ENCODE measurements at regions of chr19 and their contacts with region 1.

Region 1: GRCh38 chr19:16247353-16248182 is 49.9 kb downstream of the AP1M1 start:
- DNase-seq: peak; percentile 71 to 80 (median 73)
- H3K4me3 ChIP-seq: no peak overlapping the region
- H3K4me3 Mint-ChIP-seq: peak overlapping the region in 6 of 8 donors; percentile 23 to 66 (median 54)
- H3K27ac ChIP-seq: no peak overlapping the region
- H3K27ac Mint-ChIP-seq: peak overlapping the region; percentile 61 to 84 (median 67)
- H3K4me1 ChIP-seq: peaks cover 17% of the 10 kb centered on the region
- H3K4me1 Mint-ChIP-seq: peaks cover 11 to 26% (median 21%) of the 10 kb centered on the region in 4 donors
- H3K27me3 ChIP-seq: no peaks in the 10 kb centered on the region
- H3K27me3 Mint-ChIP-seq: peaks cover 0 to 3% of the 10 kb centered on the region in 2 donors

Region 2: GRCh38 chr19:16259385-16260159 is 12.0 kb after region 1 on chr19:
- CTCF ChIA-PET with region 1: interaction called, 20 read pairs
- POLR2A ChIA-PET with region 1: no interaction called
- intact Hi-C with region 1: no loop called
- DNase-seq: no peak
- H3K4me3 ChIP-seq: no peak overlapping the region
- H3K4me3 Mint-ChIP-seq: peak overlapping the region in 5 of 8 donors; percentile 2 to 62 (median 18)
- H3K27ac ChIP-seq: no peak overlapping the region
- H3K27ac Mint-ChIP-seq: peak overlapping the region in 2 of 7 donors; percentile 84 to 86
- H3K4me1 ChIP-seq: peaks cover 59% of the 10 kb centered on the region
- H3K4me1 Mint-ChIP-seq: peaks cover 23 to 70% (median 44%) of the 10 kb centered on the region in 4 donors
- H3K27me3 ChIP-seq: no peaks in the 10 kb centered on the region
- H3K27me3 Mint-ChIP-seq: no peaks in the 10 kb centered on the region

Region 3: DNA sequence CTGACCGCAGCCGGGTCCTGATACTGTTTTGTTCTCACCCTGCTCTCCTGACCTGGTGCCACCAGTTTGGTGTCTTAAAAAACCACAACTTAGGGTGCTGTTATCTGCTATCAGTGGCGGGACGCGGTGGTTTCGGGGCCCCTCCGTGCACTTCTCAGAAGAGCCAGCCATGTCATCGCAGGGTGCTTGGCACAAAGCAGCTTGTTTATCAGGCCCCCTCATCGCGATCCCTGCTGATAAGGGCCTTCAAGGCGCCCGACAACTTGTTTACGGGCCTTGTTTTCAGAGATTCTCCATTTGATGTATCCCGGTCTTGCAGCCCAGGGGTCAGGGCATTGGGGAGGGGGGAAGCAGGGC is 19.0 kb after region 1 on chr19:
- CTCF ChIA-PET with region 1: interaction called, 20 read pairs
- POLR2A ChIA-PET with region 1: interaction called, 5 read pairs
- intact Hi-C with region 1: no loop called
- DNase-seq: peak; percentile 59 to 81 (median 70)
- H3K4me3 ChIP-seq: peak overlapping the region in 1 of 2 donors; percentile 14
- H3K4me3 Mint-ChIP-seq: peak overlapping the region in 7 of 8 donors; percentile 21 to 79 (median 67)
- H3K27ac ChIP-seq: peak overlapping the region; percentile 33
- H3K27ac Mint-ChIP-seq: peak overlapping the region; percentile 84 to 93 (median 89)
- H3K4me1 ChIP-seq: peaks cover 58% of the 10 kb centered on the region
- H3K4me1 Mint-ChIP-seq: peaks cover 39 to 68% (median 53%) of the 10 kb centered on the region in 4 donors
- H3K27me3 ChIP-seq: no peaks in the 10 kb centered on the region
- H3K27me3 Mint-ChIP-seq: no peaks in the 10 kb centered on the region

Region 4: DNA sequence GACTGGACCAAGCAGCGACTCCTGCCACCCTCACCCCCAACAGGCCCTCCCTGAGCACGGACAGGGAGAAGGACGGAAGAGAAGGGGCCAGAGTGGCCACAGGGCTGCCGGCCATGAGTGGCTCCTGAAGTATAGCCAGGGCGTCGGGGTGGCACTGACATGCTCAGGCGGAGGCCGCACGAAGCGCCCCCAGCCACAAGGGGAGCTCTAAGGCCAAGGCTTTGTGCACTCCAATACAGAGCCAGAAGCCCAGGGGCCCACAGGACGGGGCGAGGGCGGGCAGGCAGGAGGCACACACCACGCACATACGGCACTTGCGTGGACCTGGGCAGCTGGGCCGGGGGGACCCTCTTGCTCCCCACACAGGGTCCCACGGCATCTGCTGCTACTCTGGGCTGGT is 129.1 kb after region 1 on chr19:
- CTCF ChIA-PET with region 1: interaction called, 257 read pairs
- POLR2A ChIA-PET with region 1: interaction called, 62 read pairs
- intact Hi-C with region 1: no loop called
- DNase-seq: peak in 1 of 5 donors; percentile 23
- H3K4me3 ChIP-seq: no peak overlapping the region
- H3K4me3 Mint-ChIP-seq: peak overlapping the region in 3 of 8 donors; percentile 5 to 57 (median 31)
- H3K27ac ChIP-seq: peak overlapping the region; percentile 35
- H3K27ac Mint-ChIP-seq: peak overlapping the region in 5 of 7 donors; percentile 9 to 97 (median 82)
- H3K4me1 ChIP-seq: peaks cover 99% of the 10 kb centered on the region
- H3K4me1 Mint-ChIP-seq: peaks cover 24 to 63% (median 47%) of the 10 kb centered on the region in 4 donors
- H3K27me3 ChIP-seq: no peaks in the 10 kb centered on the region
- H3K27me3 Mint-ChIP-seq: no peaks in the 10 kb centered on the region

Region 5: GRCh38 chr19:16397791-16398471 is 150.4 kb after region 1 on chr19:
- CTCF ChIA-PET with region 1: interaction called, 15 read pairs
- POLR2A ChIA-PET with region 1: no interaction called
- intact Hi-C with region 1: no loop called
- DNase-seq: no peak
- H3K4me3 ChIP-seq: no peak overlapping the region
- H3K4me3 Mint-ChIP-seq: no peak overlapping the region
- H3K27ac ChIP-seq: no peak overlapping the region
- H3K27ac Mint-ChIP-seq: peak overlapping the region in 6 of 7 donors; percentile 16 to 93 (median 84)
- H3K4me1 ChIP-seq: peaks cover 18% of the 10 kb centered on the region
- H3K4me1 Mint-ChIP-seq: peaks cover 6 to 31% (median 12%) of the 10 kb centered on the region in 4 donors
- H3K27me3 ChIP-seq: no peaks in the 10 kb centered on the region
- H3K27me3 Mint-ChIP-seq: no peaks in the 10 kb centered on the region

Region 6: GRCh38 chr19:16417660-16418596 is 170.4 kb after region 1 on chr19:
- CTCF ChIA-PET with region 1: interaction called, 89 read pairs
- POLR2A ChIA-PET with region 1: interaction called, 4 read pairs
- intact Hi-C with region 1: loop called (anchors 1 kb)
- DNase-seq: peak; percentile 62 to 72 (median 66)
- H3K4me3 ChIP-seq: no peak overlapping the region
- H3K4me3 Mint-ChIP-seq: no peak overlapping the region
- H3K27ac ChIP-seq: no peak overlapping the region
- H3K27ac Mint-ChIP-seq: peak overlapping the region in 5 of 7 donors; percentile 32 to 66 (median 57)
- H3K4me1 ChIP-seq: peaks cover 7% of the 10 kb centered on the region
- H3K4me1 Mint-ChIP-seq: peaks cover 1 to 13% (median 4%) of the 10 kb centered on the region in 4 donors
- H3K27me3 ChIP-seq: no peaks in the 10 kb centered on the region
- H3K27me3 Mint-ChIP-seq: no peaks in the 10 kb centered on the region

Region 7: GRCh38 chr19:16561382-16561781 is 313.8 kb after region 1 on chr19:
- CTCF ChIA-PET with region 1: no interaction called
- POLR2A ChIA-PET with region 1: no interaction called
- intact Hi-C with region 1: no loop called
- DNase-seq: no peak
- H3K4me3 ChIP-seq: no peak overlapping the region
- H3K4me3 Mint-ChIP-seq: no peak overlapping the region
- H3K27ac ChIP-seq: no peak overlapping the region
- H3K27ac Mint-ChIP-seq: peak overlapping the region in 5 of 7 donors; percentile 30 to 86 (median 74)
- H3K4me1 ChIP-seq: peaks cover 17% of the 10 kb centered on the region
- H3K4me1 Mint-ChIP-seq: peaks cover 14 to 25% (median 19%) of the 10 kb centered on the region in 4 donors
- H3K27me3 ChIP-seq: no peaks in the 10 kb centered on the region
- H3K27me3 Mint-ChIP-seq: no peaks in the 10 kb centered on the region

Region 8: DNA sequence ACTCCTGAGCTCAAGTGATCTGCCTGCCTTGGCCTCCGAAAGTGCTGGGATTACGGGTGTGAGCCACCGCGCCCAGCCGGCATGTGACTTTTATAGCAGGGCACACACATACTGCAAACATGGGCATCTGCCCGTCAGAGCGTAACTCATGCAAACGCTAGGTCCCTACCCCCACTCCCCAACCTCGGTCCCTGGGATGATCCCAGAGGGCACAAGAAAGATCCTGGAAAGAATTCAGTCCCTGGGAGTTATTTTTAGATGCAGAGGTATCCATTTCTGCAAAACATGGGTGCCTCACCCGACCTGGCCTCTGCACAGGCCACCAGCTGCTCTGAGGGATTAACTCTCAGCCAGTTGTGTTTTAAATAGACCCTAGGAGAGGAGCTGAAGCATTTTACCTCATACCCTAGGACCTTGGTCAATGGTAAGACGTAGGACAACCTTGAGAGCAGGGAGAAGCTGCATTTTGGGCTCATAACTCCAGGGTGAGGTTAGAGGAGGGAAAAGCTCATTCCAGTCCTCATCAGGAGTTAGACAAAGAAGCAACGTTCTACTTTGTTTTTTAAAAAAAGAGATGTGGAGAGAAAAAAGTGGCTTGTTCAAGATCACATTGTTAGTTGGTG is 424.2 kb after region 1 on chr19:
- CTCF ChIA-PET with region 1: no interaction called
- POLR2A ChIA-PET with region 1: no interaction called
- intact Hi-C with region 1: no loop called
- DNase-seq: no peak
- H3K4me3 ChIP-seq: no peak overlapping the region
- H3K4me3 Mint-ChIP-seq: no peak overlapping the region
- H3K27ac ChIP-seq: no peak overlapping the region
- H3K27ac Mint-ChIP-seq: peak overlapping the region in 1 of 7 donors; percentile 74
- H3K4me1 ChIP-seq: no peaks in the 10 kb centered on the region
- H3K4me1 Mint-ChIP-seq: no peaks in the 10 kb centered on the region
- H3K27me3 ChIP-seq: no peaks in the 10 kb centered on the region
- H3K27me3 Mint-ChIP-seq: peaks cover 0 to 2% of the 10 kb centered on the region in 2 donors